Astrocyte of the cerebellum (primary cell): ENCODE measurements at regions of chr21 and their contacts with region 1.

Region 1: GRCh38 chr21:30932686-30933085 is 51.3 kb upstream of the KRTAP11-1 start:
- DNase-seq: no peak
- H3K4me3 ChIP-seq: no peak overlapping the region
- CTCF ChIP-seq: no peak

Region 2: GRCh38 chr21:30882866-30883597 is 49.7 kb before region 1 on chr21:
- in situ Hi-C with region 1: loop called (anchors 5 kb)
- DNase-seq: no peak
- H3K4me3 ChIP-seq: no peak overlapping the region
- CTCF ChIP-seq: no peak

Region 3: GRCh38 chr21:31293986-31294385 is 361.3 kb after region 1 on chr21:
- in situ Hi-C with region 1: no loop called
- DNase-seq: peak; percentile 62
- H3K4me3 ChIP-seq: no peak overlapping the region
- CTCF ChIP-seq: no peak